GM13976 (cell line): ENCODE measurements at regions of chr6 and their contacts with region 1.

Region 1: DNA sequence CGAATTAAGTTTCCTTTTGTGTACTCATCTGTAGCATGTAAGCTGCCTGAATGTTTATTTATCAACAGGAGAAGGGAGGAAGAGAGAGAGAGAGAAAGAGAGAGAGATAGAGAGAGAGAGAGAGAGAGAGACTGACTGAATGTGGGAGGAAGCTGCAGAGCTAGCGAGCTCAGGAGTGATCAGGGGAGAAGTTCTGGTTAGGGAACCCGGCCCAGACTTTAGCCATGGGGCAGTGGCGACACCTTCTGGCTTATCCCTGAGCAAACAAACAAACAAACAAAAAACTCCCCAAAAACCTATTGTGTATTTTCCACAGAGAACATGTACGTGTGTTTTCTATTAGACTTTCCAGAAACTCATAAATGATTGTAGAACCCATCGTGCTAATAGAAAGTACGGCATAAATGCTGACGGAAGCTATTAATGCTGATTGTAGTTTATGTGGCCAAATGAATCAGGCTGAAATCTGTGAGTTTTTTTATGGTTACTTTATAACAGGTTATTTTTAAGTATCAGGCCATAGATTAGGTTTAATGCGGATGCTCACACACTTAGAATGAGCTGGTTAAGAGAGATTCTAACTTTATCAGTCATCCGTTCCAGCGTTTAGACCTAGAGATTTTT is 92.8 kb downstream of the CLIC5 start:
- DNase-seq: peak; percentile 41
- CTCF ChIP-seq: peak; percentile 71

Region 2: DNA sequence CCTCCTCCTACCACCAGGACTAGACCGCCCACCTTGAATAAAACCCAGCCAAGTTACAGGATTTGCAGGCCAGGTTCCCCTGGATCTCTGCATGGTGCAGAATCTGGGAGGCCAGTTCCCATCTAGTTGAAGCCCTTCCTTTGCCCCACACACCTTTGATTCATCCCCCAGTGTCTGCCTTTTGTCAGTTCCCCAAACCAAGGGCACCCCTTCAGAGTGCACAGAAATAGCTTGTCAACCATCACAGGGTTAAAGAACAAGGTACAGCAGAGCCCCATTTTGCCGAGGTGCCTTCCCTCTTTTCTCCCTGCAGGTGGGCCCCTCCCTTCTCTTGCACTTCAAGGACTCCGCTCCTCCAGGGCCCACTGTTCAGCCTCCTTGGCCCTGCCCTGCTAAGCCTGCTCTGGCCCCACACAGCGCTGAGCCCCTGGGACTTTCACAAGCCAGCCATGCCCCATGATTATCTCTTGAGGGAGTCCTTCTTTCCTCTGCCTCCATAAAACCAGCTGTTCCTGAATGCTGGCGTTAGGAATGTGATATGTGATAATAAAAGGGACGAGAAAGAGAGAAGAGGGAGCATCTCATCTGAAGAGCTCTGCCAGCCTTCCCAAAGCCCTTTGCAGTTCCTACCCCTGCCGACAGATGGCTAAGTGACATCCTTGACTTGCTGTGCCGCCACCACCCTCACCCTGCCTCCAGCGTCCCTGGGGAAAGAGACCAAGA is 1255.0 kb before region 1 on chr6:
- in situ Hi-C with region 1: loop called (anchors 10 kb)
- DNase-seq: no peak
- CTCF ChIP-seq: no peak

Region 3: DNA sequence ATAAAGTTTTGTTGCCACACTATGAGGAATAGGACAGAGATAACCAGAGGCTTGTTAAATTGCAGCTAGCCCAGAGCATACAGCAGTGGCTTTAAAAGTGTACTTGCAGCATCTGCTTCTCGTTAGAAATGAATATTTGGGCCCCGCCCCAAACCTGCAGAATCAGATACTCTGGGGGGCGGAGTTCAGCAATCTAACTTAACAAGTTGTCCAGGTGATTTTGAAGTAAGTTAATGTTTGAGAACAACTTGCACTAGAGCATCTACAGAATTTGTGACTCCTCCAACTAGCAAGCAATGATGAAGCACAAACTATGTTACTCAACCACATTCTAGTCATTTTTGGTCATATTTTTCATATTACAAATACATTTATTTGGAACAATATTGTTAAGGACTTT is 534.5 kb before region 1 on chr6:
- in situ Hi-C with region 1: no loop called
- DNase-seq: no peak
- CTCF ChIP-seq: no peak